Pancreas (tissue), 10 donors: ENCODE measurements at regions of chr13 and their contacts with region 1.

Region 1: GRCh38 chr13:105948143-105948542 is 587.3 kb downstream of the EFNB2 start:
- DNase-seq: no peak
- ATAC-seq: no peak
- H3K4me3 ChIP-seq: no peak overlapping the region
- H3K27ac ChIP-seq: no peak overlapping the region
- H3K4me1 ChIP-seq: no peaks in the 10 kb centered on the region
- H3K27me3 ChIP-seq: no peaks in the 10 kb centered on the region
- CTCF ChIP-seq: no peak

Region 2: GRCh38 chr13:106133025-106133424 is 184.9 kb after region 1 on chr13:
- intact Hi-C with region 1: no loop called
- DNase-seq: no peak
- ATAC-seq: no peak
- H3K4me3 ChIP-seq: no peak overlapping the region
- H3K27ac ChIP-seq: no peak overlapping the region
- H3K4me1 ChIP-seq: peaks cover 20 to 24% (median 23%) of the 10 kb centered on the region in 3 donors
- H3K27me3 ChIP-seq: no peaks in the 10 kb centered on the region
- CTCF ChIP-seq: no peak

Region 3: DNA sequence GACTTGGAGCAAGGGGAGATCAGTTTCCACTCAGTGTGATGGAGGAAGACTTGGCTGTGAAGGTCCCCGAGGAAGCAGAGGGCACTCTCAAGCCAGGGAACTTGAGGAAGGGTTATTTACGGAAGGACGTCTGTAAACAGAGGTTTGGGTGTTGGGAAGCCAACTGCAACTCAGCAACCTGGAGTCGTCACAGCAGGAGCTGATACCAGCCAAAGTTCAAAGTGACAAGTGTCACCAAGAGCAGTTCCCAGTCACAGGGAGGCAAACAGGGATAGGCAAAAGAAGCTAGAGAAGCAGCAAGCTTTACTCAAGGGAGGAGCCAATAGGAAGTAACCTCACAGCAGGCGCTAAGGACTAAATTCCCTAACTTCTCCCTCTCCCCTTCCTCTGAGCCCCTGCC is 381.8 kb after region 1 on chr13:
- intact Hi-C with region 1: loop called in 1 of 3 experiments (anchors 5 kb)
- DNase-seq: no peak
- ATAC-seq: no peak
- H3K4me3 ChIP-seq: no peak overlapping the region
- H3K27ac ChIP-seq: no peak overlapping the region
- H3K4me1 ChIP-seq: no peaks in the 10 kb centered on the region
- H3K27me3 ChIP-seq: no peaks in the 10 kb centered on the region
- CTCF ChIP-seq: no peak